ENCODE measurements at regions of chr3 and their contacts with region 1.

Region 1: DNA sequence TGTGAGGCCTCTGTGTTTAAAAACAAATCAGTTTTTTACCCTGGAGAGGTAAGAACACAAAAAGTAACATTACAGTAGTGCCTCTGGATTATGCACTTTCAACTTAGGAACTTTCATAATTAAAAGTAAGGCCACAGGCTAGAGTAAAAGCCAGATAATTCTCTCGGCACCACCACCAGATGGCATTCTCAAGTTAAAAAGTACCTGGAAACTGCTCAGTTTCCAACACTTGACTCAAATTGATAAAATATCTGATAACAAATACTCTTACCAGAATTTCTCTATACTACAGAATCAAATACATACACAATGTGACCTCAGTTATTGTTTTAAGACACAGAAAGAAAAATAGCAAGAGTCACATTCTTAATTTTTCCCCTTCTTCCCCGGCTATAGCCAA is 19.9 kb downstream of the SPICE1 start:
- DNase-seq: peak; percentile 39
- H3K4me3 Mint-ChIP-seq: no peak overlapping the region
- H3K27ac Mint-ChIP-seq: no peak overlapping the region
- H3K4me1 Mint-ChIP-seq: no peaks in the 10 kb centered on the region
- H3K27me3 Mint-ChIP-seq: no peaks in the 10 kb centered on the region
- CTCF ChIP-seq: peak; percentile 39

Region 2: GRCh38 chr3:113183748-113184661 is 311.0 kb before region 1 on chr3:
- CTCF ChIA-PET with region 1: no interaction called
- POLR2A ChIA-PET with region 1: no interaction called
- intact Hi-C with region 1: no loop called
- DNase-seq: peak; percentile 52
- H3K4me3 Mint-ChIP-seq: no peak overlapping the region
- H3K27ac Mint-ChIP-seq: no peak overlapping the region
- H3K4me1 Mint-ChIP-seq: no peaks in the 10 kb centered on the region
- H3K27me3 Mint-ChIP-seq: no peaks in the 10 kb centered on the region
- CTCF ChIP-seq: no peak

Region 3: GRCh38 chr3:113194823-113195401 is 300.1 kb before region 1 on chr3:
- CTCF ChIA-PET with region 1: no interaction called
- POLR2A ChIA-PET with region 1: no interaction called
- intact Hi-C with region 1: no loop called
- DNase-seq: no peak
- H3K4me3 Mint-ChIP-seq: no peak overlapping the region
- H3K27ac Mint-ChIP-seq: no peak overlapping the region
- H3K4me1 Mint-ChIP-seq: no peaks in the 10 kb centered on the region
- H3K27me3 Mint-ChIP-seq: no peaks in the 10 kb centered on the region
- CTCF ChIP-seq: no peak

Region 4: GRCh38 chr3:113507501-113508067 is 12.5 kb after region 1 on chr3:
- CTCF ChIA-PET with region 1: interaction called, 25 read pairs
- POLR2A ChIA-PET with region 1: no interaction called
- intact Hi-C with region 1: no loop called
- DNase-seq: no peak
- H3K4me3 Mint-ChIP-seq: no peak overlapping the region
- H3K27ac Mint-ChIP-seq: no peak overlapping the region
- H3K4me1 Mint-ChIP-seq: no peaks in the 10 kb centered on the region
- H3K27me3 Mint-ChIP-seq: no peaks in the 10 kb centered on the region
- CTCF ChIP-seq: no peak

Region 5: GRCh38 chr3:113552851-113553250 is 57.8 kb after region 1 on chr3:
- CTCF ChIA-PET with region 1: interaction called, 6 read pairs
- POLR2A ChIA-PET with region 1: no interaction called
- intact Hi-C with region 1: loop called (anchors 1 kb)
- DNase-seq: peak; percentile 18
- H3K4me3 Mint-ChIP-seq: no peak overlapping the region
- H3K27ac Mint-ChIP-seq: no peak overlapping the region
- H3K4me1 Mint-ChIP-seq: peaks cover 9% of the 10 kb centered on the region
- H3K27me3 Mint-ChIP-seq: no peaks in the 10 kb centered on the region
- CTCF ChIP-seq: no peak

Region 6: GRCh38 chr3:113606539-113607218 is 111.6 kb after region 1 on chr3:
- CTCF ChIA-PET with region 1: interaction called, 10 read pairs
- POLR2A ChIA-PET with region 1: no interaction called
- intact Hi-C with region 1: no loop called
- DNase-seq: no peak
- H3K4me3 Mint-ChIP-seq: no peak overlapping the region
- H3K27ac Mint-ChIP-seq: no peak overlapping the region
- H3K4me1 Mint-ChIP-seq: no peaks in the 10 kb centered on the region
- H3K27me3 Mint-ChIP-seq: no peaks in the 10 kb centered on the region
- CTCF ChIP-seq: no peak

Region 7: GRCh38 chr3:113626503-113627371 is 131.7 kb after region 1 on chr3:
- CTCF ChIA-PET with region 1: interaction called, 83 read pairs
- POLR2A ChIA-PET with region 1: interaction called, 3 read pairs
- intact Hi-C with region 1: loop called (anchors 1 kb)
- DNase-seq: peak; percentile 74
- H3K4me3 Mint-ChIP-seq: no peak overlapping the region
- H3K27ac Mint-ChIP-seq: no peak overlapping the region
- H3K4me1 Mint-ChIP-seq: peaks cover 13% of the 10 kb centered on the region
- H3K27me3 Mint-ChIP-seq: no peaks in the 10 kb centered on the region
- CTCF ChIP-seq: peak; percentile 90

Region 8: GRCh38 chr3:113968986-113969385 is 474.0 kb after region 1 on chr3:
- CTCF ChIA-PET with region 1: no interaction called
- POLR2A ChIA-PET with region 1: no interaction called
- intact Hi-C with region 1: no loop called
- DNase-seq: peak; percentile 66
- H3K4me3 Mint-ChIP-seq: no peak overlapping the region
- H3K27ac Mint-ChIP-seq: no peak overlapping the region
- H3K4me1 Mint-ChIP-seq: peaks cover 7% of the 10 kb centered on the region
- H3K27me3 Mint-ChIP-seq: no peaks in the 10 kb centered on the region
- CTCF ChIP-seq: no peak